ENCODE measurements at regions of chr15 and their contacts with region 1.

Region 1: GRCh38 chr15:81265944-81266775 is 57.8 kb downstream of the STARD5 start:
- DNase-seq: peak; percentile 86 to 92
- ATAC-seq: peak; percentile 94
- H3K4me3 ChIP-seq: no peak overlapping the region
- H3K27ac ChIP-seq: no peak overlapping the region
- H3K4me1 ChIP-seq: no peaks in the 10 kb centered on the region
- H3K27me3 ChIP-seq: no peaks in the 10 kb centered on the region

Region 2: DNA sequence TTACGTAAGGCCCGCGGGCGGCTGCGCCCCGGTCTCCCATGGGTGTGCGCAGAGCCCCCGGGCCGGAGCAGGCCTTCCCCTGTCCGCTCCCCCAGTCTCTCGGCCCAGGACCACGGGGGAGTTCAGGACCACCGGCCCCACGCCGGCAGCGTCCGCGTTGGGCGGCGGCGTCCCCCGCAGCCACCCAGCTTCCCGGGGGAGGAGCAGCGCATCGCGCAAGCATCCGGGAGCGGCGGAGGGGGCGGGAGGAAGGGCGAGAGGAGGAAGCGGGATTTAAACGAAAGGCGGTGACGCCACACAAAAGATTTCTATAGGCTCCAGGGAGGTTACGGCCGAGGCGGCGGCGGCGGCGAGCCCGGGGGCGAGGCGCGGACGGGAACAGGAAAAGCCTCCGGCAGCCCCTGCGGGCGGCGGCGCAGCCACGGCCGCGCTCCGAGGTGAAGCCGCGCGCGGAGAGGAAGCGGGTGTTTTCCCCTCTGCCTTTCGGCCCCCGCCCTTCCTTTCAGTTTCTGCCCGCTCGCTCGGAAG is 265.5 kb before region 1 on chr15 and contains the start of gene TLNRD1:
- intact Hi-C with region 1: loop called in 1 of 2 experiments (anchors 5 kb)
- DNase-seq: peak; percentile 96
- ATAC-seq: peak; percentile 87
- H3K4me3 ChIP-seq: peak within 1 kb of the TSS; percentile 81 to 91
- H3K27ac ChIP-seq: peak within 1 kb of the TSS; percentile 28 to 91
- H3K4me1 ChIP-seq: peaks cover 0 to 5% of the 10 kb centered on the region in 2 donors
- H3K27me3 ChIP-seq: no peaks in the 10 kb centered on the region
- total RNA-seq, gene TLNRD1: 15.7 to 24.4 TPM

Region 3: GRCh38 chr15:81106560-81106959 is 159.6 kb before region 1 on chr15:
- intact Hi-C with region 1: loop called (anchors 2 to 5 kb)
- DNase-seq: no peak
- ATAC-seq: peak; percentile 53
- H3K4me3 ChIP-seq: no peak overlapping the region
- H3K27ac ChIP-seq: no peak overlapping the region
- H3K4me1 ChIP-seq: no peaks in the 10 kb centered on the region
- H3K27me3 ChIP-seq: no peaks in the 10 kb centered on the region

Region 4: GRCh38 chr15:81155375-81156218 is 110.6 kb before region 1 on chr15:
- intact Hi-C with region 1: loop called (anchors 1 to 5 kb)
- DNase-seq: no peak
- ATAC-seq: peak; percentile 79
- H3K4me3 ChIP-seq: no peak overlapping the region
- H3K27ac ChIP-seq: no peak overlapping the region
- H3K4me1 ChIP-seq: no peaks in the 10 kb centered on the region
- H3K27me3 ChIP-seq: no peaks in the 10 kb centered on the region

Region 5: GRCh38 chr15:81373775-81374395 is 107.7 kb after region 1 on chr15 and contains the start of gene TMC3:
- intact Hi-C with region 1: no loop called
- DNase-seq: no peak
- ATAC-seq: no peak
- H3K4me3 ChIP-seq: no peak within 1 kb of the TSS
- H3K27ac ChIP-seq: no peak within 1 kb of the TSS
- H3K4me1 ChIP-seq: no peaks in the 10 kb centered on the region
- H3K27me3 ChIP-seq: no peaks in the 10 kb centered on the region
- total RNA-seq, gene TMC3: 0.81 TPM in 1 of 2 donors, not detected in the other